ENCODE measurements at regions of chr11 and their contacts with region 1.

Region 1: DNA sequence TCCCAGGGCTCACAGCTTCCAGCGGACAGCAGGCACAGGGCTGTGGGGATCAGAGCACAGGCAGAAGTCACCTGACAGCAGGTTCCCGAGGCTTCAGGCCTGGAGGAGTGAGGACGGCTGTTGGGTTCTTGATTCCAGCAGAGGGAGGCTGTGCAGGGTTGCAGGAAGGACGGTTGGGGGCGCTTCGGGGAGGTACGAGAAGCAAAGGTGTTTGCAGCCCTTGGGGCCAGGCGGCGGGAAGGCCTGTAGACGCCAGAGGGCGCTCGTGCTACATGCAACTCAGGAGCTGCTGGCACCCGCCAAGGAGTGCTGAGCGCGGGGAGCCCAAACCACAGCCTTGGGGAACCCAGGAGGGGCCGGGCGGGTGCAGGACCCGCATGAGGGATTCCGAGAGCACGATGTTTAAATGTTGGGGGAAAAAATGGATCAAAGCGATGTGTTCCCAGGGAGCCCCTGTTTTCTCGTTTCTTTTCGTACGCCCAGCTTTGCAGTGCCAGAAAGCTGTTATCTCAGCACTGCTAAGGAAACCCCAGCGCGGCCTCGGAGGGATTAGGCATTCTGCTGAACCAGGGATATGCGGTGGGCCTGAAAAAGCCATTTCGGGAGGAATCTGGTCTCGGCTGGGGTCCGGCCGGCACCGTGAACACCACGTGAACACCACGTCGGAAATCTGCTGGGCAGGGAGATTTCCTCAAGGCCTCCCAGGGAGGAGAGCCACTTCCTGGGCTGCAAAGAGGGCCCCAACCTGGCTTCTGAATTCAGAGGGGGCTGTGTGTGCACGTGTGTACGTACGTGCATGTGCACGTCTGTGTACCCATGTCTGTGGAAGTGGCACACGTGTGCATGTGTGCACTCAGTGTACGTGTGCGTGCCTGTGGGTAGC is 88.1 kb downstream of the KCNQ1 start:
- DNase-seq: peak; percentile 96
- H3K4me3 Mint-ChIP-seq: peak overlapping the region; percentile 66
- H3K27ac Mint-ChIP-seq: no peak overlapping the region
- H3K4me1 Mint-ChIP-seq: peaks cover 15% of the 10 kb centered on the region
- H3K27me3 Mint-ChIP-seq: no peaks in the 10 kb centered on the region

Region 2: GRCh38 chr11:2196970-2197770 is 335.8 kb before region 1 on chr11:
- CTCF ChIA-PET with region 1: interaction called, 6 read pairs
- intact Hi-C with region 1: loop called (anchors 10 kb)
- DNase-seq: peak; percentile 82
- H3K4me3 Mint-ChIP-seq: no peak overlapping the region
- H3K27ac Mint-ChIP-seq: no peak overlapping the region
- H3K4me1 Mint-ChIP-seq: no peaks in the 10 kb centered on the region
- H3K27me3 Mint-ChIP-seq: no peaks in the 10 kb centered on the region

Region 3: DNA sequence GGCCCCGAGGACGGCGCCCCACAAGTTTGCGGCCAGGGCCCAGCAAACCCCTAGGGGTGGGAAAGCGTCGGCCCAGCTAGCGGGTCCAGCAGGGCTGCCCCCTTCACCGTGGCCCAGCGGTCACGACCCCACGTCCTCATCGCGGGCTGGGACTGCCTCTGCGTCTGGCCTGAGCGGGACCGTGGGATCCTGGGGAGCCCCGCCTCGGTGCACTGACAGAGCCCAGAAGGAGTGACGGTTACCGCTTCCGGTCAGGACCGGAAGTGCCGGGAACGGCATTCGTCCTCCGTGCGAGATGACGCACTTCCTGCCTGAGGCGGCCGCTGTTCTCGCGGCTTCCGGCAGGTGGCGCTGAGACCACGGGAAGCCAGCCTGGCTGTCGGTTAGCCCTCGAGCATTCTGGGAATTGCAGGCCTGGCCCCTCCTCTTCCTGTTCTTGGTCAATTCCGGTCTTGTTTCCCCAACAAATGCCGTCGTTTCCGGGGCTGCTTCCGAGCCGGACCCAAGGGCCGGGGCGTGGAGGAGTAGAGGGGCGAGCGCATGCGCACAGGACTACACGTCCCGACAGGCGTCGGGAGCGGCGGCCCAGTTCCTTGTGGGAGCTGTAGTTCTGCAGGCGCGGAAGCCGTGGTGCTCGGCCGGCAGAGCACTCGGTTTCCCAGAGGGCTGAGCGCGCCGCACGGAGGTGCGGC is 132.7 kb before region 1 on chr11 and contains the start of gene TSSC4:
- CTCF ChIA-PET with region 1: interaction called, 4 read pairs
- intact Hi-C with region 1: loop called (anchors 1 kb)
- DNase-seq: peak; percentile 99
- H3K4me3 Mint-ChIP-seq: peak within 1 kb of the TSS; percentile 84
- H3K27ac Mint-ChIP-seq: peak within 1 kb of the TSS; percentile 87
- H3K4me1 Mint-ChIP-seq: peaks cover 16% of the 10 kb centered on the region
- H3K27me3 Mint-ChIP-seq: no peaks in the 10 kb centered on the region
- total RNA-seq, gene TSSC4: 41.9 to 42.0 TPM

Region 4: DNA sequence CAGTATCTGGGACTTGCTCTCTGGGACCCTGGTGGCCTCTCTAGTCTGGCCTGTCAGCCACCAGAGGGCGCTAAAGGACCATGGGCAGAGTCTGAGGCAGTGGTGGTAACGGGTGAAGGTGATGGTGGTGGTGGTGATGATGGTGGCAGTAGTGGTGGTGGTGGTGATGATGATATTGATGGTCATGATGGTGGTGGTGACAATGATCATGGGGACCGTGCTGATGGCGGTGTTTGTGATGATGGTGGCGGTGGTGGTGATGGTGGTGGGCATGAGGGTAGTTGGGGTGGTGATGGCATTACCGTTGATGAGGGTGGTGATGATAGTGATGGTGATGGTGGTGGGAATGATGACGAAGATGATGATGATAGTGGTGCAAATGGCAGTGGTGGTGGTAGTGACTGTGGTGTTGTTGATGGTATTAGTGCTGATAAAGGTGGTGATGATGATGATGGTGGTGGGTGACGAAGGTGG is 104.6 kb before region 1 on chr11:
- CTCF ChIA-PET with region 1: interaction called, 81 read pairs
- intact Hi-C with region 1: loop called (anchors 1 kb)
- DNase-seq: peak; percentile 90
- H3K4me3 Mint-ChIP-seq: no peak overlapping the region
- H3K27ac Mint-ChIP-seq: no peak overlapping the region
- H3K4me1 Mint-ChIP-seq: no peaks in the 10 kb centered on the region
- H3K27me3 Mint-ChIP-seq: no peaks in the 10 kb centered on the region

Region 5: GRCh38 chr11:2466869-2467698 is 65.9 kb before region 1 on chr11:
- CTCF ChIA-PET with region 1: interaction called, 12 read pairs
- intact Hi-C with region 1: no loop called
- DNase-seq: peak; percentile 77
- H3K4me3 Mint-ChIP-seq: peak overlapping the region; percentile 12
- H3K27ac Mint-ChIP-seq: no peak overlapping the region
- H3K4me1 Mint-ChIP-seq: peaks cover 66% of the 10 kb centered on the region
- H3K27me3 Mint-ChIP-seq: no peaks in the 10 kb centered on the region

Region 6: DNA sequence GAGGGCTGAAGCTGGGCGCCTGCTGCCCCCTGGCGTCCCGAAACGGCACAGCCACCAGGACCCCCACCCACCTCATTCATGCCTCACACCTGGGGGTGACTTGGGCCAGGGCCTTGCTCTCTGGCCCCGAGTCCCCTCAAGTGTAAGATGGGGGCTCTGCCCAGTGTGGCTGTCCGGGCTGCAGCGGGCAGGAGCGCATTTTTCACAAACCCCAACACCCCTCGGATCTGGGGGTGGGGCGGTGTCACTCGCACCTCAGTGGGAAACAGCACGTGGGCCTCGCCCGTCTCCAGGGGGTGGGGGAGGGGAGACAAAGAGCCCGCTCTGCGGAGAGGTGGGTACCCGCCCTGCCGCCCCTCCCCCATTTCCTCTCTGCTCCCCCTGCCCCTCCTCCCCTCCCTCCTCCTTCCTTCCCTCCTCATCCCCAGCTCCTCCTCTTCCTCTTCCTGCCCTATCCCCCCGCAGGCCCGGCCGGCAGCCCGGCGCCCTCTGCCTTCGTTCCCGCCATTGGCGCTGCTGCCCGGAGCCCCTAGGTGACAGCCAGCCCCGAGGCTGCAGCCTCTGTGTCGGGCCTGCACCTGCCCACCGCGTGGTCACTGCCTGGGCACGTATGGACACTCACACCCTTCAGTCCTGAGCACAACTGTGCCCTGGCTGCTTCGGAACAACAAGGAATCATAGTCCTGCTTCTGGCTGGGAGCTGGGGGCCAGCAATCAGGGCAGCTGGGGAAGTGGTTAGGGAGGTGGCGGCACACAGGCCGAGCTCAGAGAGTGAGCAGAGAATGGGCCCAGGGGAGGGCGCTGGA is 359.5 kb after region 1 on chr11:
- CTCF ChIA-PET with region 1: interaction called, 280 read pairs
- intact Hi-C with region 1: loop called (anchors 1 kb)
- DNase-seq: peak; percentile 79
- H3K4me3 Mint-ChIP-seq: peak overlapping the region; percentile 84
- H3K27ac Mint-ChIP-seq: peak overlapping the region; percentile 80
- H3K4me1 Mint-ChIP-seq: peaks cover 16% of the 10 kb centered on the region
- H3K27me3 Mint-ChIP-seq: no peaks in the 10 kb centered on the region

Region 7: DNA sequence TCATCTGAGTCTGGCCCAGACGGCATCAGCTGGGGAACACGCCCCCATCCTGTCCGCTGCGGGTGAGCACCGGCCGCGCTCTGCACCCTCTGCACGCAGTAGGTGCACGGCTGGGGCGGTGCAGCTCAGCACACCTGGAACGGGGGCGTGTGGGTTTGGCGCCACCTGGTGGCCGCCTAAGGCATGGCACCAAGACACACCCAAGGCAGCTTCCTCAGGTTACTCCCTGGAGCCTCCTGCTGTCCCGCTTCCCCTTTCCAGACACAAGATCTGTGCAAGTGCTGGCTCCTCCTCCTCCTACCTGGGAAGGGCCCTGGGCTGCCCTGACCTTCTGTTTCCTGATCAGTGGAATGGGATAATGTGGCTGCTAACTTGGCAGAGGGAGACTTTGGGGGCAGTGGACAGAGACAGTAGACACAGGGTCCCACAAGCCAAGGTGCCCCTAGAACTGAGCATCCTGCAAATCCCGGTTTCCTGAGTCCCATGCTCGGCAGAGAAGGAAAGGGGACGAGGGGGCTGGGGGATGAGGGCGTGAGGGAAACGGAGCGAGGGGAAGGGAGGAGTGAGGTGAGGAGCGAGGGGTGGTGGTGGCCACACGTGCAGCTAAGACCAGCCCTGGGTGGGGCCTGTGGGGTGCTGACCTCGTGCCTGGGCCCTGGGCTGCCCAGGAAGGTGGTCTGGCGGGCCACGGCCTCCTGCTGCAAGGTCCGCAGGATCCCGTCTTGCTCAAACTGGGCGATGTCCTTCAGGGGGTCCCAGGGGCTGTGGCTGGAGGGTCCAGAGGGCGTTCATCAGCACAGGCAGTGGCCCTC is 559.1 kb after region 1 on chr11:
- CTCF ChIA-PET with region 1: interaction called, 38 read pairs
- intact Hi-C with region 1: loop called (anchors 1 kb)
- DNase-seq: peak; percentile 78
- H3K4me3 Mint-ChIP-seq: no peak overlapping the region
- H3K27ac Mint-ChIP-seq: no peak overlapping the region
- H3K4me1 Mint-ChIP-seq: no peaks in the 10 kb centered on the region
- H3K27me3 Mint-ChIP-seq: no peaks in the 10 kb centered on the region

Measured in activated naive CD4-positive, alpha-beta T cell treated with anti-CD3 and anti-CD28 coated beads for 36 hours (primary cell).